ENCODE measurements at regions of chr6 and their contacts with region 1.

Region 1: GRCh38 chr6:27157459-27158315 is 89.8 kb upstream of the PRSS16 start:
- DNase-seq: peak; percentile 94
- H3K4me3 Mint-ChIP-seq: peak overlapping the region; percentile 90
- H3K27ac Mint-ChIP-seq: peak overlapping the region; percentile 92
- H3K4me1 Mint-ChIP-seq: peaks cover 45% of the 10 kb centered on the region
- H3K27me3 Mint-ChIP-seq: peaks cover 2% of the 10 kb centered on the region

Region 2: GRCh38 chr6:26329763-26330511 is 827.8 kb before region 1 on chr6:
- intact Hi-C with region 1: loop called (anchors 5 kb)
- DNase-seq: peak; percentile 89
- H3K4me3 Mint-ChIP-seq: peak overlapping the region; percentile 87
- H3K27ac Mint-ChIP-seq: peak overlapping the region; percentile 86
- H3K4me1 Mint-ChIP-seq: peaks cover 48% of the 10 kb centered on the region
- H3K27me3 Mint-ChIP-seq: peaks cover 25% of the 10 kb centered on the region

Region 3: DNA sequence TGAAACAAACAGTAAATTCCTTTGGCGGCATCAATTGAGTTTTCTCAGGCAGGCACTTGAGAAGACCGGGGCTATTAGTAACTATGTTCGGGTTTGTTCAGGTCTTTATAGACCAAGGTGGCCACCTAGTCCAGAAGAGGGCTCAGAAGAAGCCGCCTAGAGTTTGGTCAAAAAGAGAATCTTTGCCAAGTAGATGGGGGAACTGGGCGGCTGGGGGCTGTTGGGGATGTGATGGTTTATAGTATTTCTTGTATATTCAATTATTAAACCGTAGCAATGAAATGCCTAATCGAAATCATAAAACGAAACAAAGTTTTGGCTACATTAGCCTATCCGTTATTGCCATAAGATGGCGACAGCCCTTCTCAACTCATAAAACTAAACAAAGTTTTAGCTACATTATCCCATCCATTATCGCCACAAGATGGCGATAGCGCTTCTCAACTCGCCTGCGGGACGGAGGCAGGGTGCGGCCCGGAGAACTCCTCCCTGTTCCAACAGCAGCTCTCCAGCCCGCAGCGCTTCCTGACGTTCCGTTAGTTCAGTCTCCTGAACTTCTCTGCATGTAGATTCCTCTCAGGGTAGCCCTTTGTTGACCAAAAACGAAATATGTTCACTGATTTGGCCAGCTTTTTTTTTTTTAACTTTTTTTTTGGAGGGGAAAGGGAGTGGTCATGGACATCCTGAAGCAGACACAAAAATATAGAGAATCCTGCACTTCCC is 30.7 kb before region 1 on chr6:
- intact Hi-C with region 1: loop called (anchors 1 kb)
- DNase-seq: peak; percentile 96
- H3K4me3 Mint-ChIP-seq: peak overlapping the region; percentile 88
- H3K27ac Mint-ChIP-seq: peak overlapping the region; percentile 84
- H3K4me1 Mint-ChIP-seq: peaks cover 38% of the 10 kb centered on the region
- H3K27me3 Mint-ChIP-seq: no peaks in the 10 kb centered on the region

Region 4: DNA sequence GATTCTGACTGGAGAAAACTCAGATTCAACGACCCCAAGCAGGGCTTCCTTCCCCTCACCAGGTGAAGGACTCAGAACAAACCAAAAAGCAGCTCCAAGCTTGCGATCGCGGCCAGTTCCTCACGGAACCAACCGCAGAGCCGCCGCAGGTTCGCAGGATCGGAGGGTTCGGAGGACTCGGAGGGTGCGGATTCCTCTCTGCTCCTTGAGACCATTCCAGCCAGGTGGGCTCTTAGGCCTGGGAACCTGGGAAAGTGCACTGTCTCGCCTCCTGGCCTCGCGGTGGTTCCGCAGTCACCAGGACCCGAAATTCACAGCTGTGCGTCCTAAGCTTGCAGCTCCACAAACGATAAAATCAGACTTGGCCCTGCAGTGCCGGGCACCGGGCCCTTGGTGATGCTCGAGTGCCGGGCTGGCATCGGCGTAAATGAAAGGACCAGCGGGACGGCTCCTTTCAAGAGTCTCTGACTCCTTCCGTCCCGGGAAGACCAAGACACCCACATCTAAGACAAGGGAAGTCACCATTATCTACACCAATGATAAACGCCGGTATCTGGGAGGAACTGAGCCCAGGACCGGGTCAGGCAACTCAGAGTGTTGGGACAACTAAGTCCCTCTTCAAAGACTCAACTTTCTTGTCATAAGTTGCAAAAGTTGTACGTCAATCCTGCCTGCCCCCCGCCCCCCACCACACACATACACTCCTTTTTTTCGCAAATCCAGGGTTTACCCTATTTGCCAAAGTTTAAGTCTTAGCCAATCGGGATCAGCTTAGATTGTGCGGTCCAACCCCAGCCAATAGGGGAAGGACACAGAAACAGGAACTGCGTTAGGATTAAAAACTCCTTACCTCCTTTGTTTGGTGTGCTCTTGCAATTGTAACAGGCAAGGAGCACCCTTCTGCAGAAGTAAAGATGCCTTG is 20.1 kb after region 1 on chr6:
- intact Hi-C with region 1: loop called (anchors 1 kb)
- DNase-seq: peak; percentile 92
- H3K4me3 Mint-ChIP-seq: peak overlapping the region; percentile 95
- H3K27ac Mint-ChIP-seq: peak overlapping the region; percentile 93
- H3K4me1 Mint-ChIP-seq: peaks cover 17% of the 10 kb centered on the region
- H3K27me3 Mint-ChIP-seq: peaks cover 33% of the 10 kb centered on the region